ENCODE measurements at regions of chr7 and their contacts with region 1.

Region 1: DNA sequence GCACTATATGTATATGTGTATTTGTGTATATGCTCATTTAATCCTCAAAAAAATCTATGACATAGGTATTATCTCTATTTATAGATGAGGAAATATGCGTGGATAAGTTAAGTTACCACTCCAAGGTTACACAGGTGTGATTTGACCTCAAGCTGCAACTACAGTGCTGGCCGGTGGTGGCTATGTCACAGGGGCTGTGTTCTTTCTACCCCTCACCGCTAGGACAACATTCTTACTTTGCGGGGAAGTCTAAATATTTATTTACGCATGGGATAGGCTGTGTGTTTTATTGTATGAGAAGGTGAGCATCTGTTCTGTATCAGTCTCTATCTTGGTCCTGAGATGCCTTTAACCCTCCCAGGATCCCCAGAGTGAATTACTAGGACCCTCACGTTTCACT is 60.0 kb downstream of the CREB5 start:
- DNase-seq: no peak

Region 2: DNA sequence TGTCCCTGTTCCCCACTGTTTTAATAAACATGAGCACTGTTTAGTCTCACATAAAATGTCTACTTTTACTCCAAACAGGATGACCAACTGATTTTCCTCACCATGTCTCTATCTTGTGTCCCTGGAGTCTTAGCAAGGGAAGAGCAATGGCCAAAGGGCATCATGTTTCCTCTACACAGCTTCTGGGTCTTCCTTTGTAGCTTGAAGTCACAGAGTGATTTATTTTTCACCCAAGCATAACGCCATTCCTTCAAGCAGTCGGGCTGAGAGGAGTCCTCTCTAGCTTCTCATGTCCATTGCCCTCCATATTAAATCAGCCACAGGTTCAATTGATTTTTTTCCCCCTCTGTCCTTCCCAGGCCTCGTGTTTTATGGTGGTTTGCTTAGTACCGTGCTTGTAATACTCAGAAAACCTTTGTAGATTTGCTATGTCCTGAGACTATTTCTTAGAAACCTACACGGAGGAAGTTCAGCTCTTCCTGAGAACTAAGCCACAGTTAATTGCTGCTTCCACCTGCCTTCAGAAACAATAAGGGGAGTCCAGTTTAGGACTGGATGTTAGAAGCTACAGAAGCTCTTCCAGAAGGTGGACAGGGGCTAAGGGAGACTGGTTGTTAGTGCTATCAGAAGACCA is 118.8 kb after region 1 on chr7:
- CTCF ChIA-PET with region 1: interaction called, 12 read pairs
- POLR2A ChIA-PET with region 1: no interaction called
- DNase-seq: no peak